Mammary epithelial cell (primary cell): ENCODE measurements at regions of chr14 and their contacts with region 1.

Region 1: DNA sequence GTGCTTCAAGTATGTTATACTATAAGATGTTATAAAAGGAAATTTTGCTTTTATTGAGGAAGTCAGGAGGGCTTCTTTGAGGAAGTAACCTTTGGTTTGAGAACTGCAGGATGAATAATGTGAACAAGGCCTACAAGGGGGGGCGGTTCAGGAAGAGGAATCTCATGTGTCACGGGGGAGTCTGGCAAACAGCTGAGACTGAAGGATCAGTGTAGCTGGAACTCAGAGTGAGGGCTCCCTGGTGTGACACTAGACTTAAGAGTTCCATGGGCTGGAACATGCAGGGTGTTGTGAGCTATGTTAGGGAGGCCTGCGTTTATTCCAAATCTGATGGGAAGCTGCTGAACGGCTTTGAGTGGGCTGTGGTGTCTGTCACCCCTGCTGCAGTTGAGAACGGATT is 62.3 kb downstream of the UNC79 start:
- DNase-seq: no peak
- H3K4me3 ChIP-seq: no peak overlapping the region
- H3K27ac ChIP-seq: no peak overlapping the region
- H3K4me1 ChIP-seq: no peaks in the 10 kb centered on the region
- H3K27me3 ChIP-seq: no peaks in the 10 kb centered on the region
- CTCF ChIP-seq: no peak

Region 2: DNA sequence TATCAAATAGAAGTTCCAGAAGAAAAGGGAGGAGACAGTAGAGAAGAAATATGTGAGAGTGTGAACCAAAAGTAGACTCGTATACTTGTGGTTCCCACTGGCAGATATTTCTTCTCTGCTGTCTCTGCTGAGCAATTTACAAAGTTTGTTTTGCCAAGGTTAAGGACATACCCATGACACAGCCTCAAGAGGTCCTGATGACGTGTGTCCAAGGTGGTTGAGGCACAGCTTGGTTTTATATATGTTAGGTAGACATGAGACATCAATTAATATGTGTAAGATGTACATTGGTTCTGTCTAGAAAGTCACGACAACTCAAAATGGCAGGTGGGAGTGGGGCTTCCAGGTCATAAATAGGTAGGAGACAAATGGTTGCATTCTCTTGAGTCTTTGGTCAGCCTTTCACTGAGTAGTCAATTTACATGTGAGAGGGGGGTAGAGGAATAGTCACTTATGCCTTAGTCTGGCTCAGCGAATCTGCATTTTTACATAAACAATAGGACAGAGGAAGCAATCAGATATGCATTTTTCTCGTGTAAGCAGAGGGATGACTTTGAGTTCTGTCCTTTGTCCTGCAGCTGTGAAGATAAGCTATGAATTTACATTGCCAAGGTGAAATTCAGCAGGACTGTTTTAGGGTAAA is 90.2 kb before region 1 on chr14:
- CTCF ChIA-PET with region 1: no interaction called
- dilution Hi-C with region 1: loop called (anchors 10 kb)
- in situ Hi-C with region 1: no loop called
- intact Hi-C with region 1: no loop called
- DNase-seq: no peak
- H3K4me3 ChIP-seq: no peak overlapping the region
- H3K27ac ChIP-seq: no peak overlapping the region
- H3K4me1 ChIP-seq: no peaks in the 10 kb centered on the region
- H3K27me3 ChIP-seq: no peaks in the 10 kb centered on the region
- CTCF ChIP-seq: no peak

Region 3: DNA sequence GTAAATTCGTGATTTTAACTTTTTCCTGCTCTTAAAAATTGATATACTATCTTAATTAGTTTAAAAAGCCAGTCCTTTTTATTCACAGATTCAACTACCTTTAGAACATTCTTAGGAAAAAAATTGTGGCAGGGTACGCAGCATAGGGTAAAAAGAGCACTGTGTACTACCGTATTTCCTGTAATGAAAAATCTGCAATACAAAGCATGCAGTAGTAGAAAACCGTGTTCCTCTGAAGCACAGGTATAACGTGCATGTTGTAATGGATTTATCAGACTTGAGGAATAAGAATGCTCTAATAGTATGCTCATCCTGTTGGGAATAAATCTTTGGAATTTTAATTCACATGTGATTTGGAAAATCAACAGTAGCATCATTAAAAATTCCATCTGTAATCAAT is 78.2 kb after region 1 on chr14:
- CTCF ChIA-PET with region 1: no interaction called
- dilution Hi-C with region 1: loop called (anchors 10 kb)
- in situ Hi-C with region 1: no loop called
- intact Hi-C with region 1: no loop called
- DNase-seq: no peak
- H3K4me3 ChIP-seq: no peak overlapping the region
- H3K27ac ChIP-seq: no peak overlapping the region
- H3K4me1 ChIP-seq: no peaks in the 10 kb centered on the region
- H3K27me3 ChIP-seq: peaks cover 1% of the 10 kb centered on the region
- CTCF ChIP-seq: no peak